ENCODE measurements at regions of chr17 and their contacts with region 1.

Region 1: DNA sequence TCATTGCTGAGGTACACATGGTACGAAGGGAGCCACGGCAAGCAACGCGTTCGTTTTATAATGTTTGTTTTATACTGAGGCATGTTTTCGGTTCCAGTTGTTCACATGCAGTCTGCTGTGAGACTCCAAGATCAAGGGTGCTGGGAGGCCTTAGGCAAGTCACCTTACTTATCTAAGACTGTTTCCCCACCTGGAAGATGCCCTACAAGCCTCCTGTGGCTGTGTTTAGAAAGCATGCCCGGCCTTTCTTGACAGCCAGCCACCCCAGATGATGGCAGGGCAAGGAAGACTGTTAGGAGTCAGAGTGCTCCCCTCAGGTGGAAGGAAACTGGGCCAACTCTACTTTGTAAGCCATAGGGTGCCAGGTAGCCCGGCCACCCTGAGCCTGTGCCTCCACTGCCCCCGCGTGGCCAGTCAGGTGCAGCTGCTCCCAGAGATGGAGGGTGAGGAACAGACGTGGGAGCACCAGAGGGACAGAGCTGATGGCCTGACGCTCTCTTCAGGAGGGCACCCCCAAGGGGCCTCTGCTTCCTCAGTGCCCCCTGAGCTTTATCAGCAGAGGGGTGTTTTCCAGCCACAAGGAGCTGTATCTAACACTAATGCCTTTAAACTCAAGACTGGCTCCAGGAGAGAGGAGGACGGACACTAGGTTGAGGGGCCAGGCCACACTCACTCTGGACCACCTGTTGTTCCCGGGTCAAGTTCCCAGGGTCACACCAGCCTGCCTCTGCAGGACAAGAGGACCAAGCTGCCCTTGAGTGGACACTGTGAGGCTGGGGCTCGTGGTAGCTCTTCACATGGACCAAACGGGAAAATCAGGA is 5.4 kb downstream of the NAT9 start:
- DNase-seq: peak; percentile 67 to 81
- ATAC-seq: peak; percentile 60 to 70 (median 66)
- H3K4me3 ChIP-seq: no peak overlapping the region
- H3K27ac ChIP-seq: no peak overlapping the region
- H3K4me1 ChIP-seq: peaks cover 17% of the 10 kb centered on the region
- H3K27me3 ChIP-seq: no peaks in the 10 kb centered on the region
- CTCF ChIP-seq: peak; percentile 70

Region 2: GRCh38 chr17:74677558-74678466 is 92.9 kb before region 1 on chr17:
- intact Hi-C with region 1: no loop called
- DNase-seq: peak; percentile 25 to 78
- ATAC-seq: peak in 1 of 4 donors; percentile 54
- H3K4me3 ChIP-seq: no peak overlapping the region
- H3K27ac ChIP-seq: no peak overlapping the region
- H3K4me1 ChIP-seq: no peaks in the 10 kb centered on the region
- H3K27me3 ChIP-seq: peaks cover 0 to 34% (median 0%) of the 10 kb centered on the region in 3 donors
- CTCF ChIP-seq: no peak

Region 3: GRCh38 chr17:74748529-74749365 is 22.0 kb before region 1 on chr17 and contains the start of gene NHERF1:
- intact Hi-C with region 1: loop called (anchors 1 to 2 kb)
- DNase-seq: peak; percentile 96
- ATAC-seq: peak; percentile 92 to 96 (median 94)
- H3K4me3 ChIP-seq: peak within 1 kb of the TSS; percentile 80
- H3K27ac ChIP-seq: peak within 1 kb of the TSS; percentile 73
- H3K4me1 ChIP-seq: peaks cover 11% of the 10 kb centered on the region
- H3K27me3 ChIP-seq: peaks cover 0 to 11% (median 1%) of the 10 kb centered on the region in 3 donors
- CTCF ChIP-seq: no peak
- total RNA-seq, gene NHERF1: 3.9 to 16.6 (median 4.9) TPM

Measured in psoas muscle (tissue), 8 donors.